Posterior cingulate gyrus (tissue), 11 donors: ENCODE measurements at regions of chr18 and their contacts with region 1.

Region 1: GRCh38 chr18:63320046-63320689 is 599 bp upstream of the BCL2 start:
- DNase-seq: peak; percentile 68 to 96 (median 78)

Region 2: GRCh38 chr18:62904396-62905285 is 415.5 kb before region 1 on chr18:
- intact Hi-C with region 1: no loop called
- DNase-seq: no peak

Region 3: DNA sequence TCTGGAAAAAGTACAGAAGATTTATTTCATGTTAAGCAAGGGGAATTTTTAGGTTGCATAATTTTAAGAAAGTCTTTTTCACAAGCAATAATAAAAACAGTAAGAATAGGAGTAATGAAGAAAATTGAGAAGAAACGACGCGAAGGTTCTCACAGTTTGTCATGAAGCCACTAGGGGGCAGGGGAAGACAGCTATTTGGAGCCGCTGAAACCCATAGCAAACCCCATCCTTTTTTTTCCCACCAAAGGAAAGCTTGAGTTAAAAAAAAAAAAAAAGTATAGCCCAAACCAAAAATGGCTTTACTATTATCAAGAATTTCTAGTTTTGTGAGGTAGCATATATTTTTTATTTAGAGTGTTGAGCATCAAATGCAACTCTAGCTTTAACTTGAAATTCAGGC is 303.9 kb before region 1 on chr18:
- intact Hi-C with region 1: loop called (anchors 1 kb)
- DNase-seq: peak in 6 of 10 donors; percentile 29 to 56 (median 42)

Region 4: GRCh38 chr18:63119647-63120046 is 200.5 kb before region 1 on chr18:
- intact Hi-C with region 1: loop called (anchors 1 kb)
- DNase-seq: peak in 9 of 10 donors; percentile 21 to 94 (median 61)

Region 5: GRCh38 chr18:63131106-63131958 is 188.8 kb before region 1 on chr18:
- intact Hi-C with region 1: loop called (anchors 5 kb)
- DNase-seq: peak in 4 of 10 donors; percentile 42 to 79 (median 58)

Region 6: DNA sequence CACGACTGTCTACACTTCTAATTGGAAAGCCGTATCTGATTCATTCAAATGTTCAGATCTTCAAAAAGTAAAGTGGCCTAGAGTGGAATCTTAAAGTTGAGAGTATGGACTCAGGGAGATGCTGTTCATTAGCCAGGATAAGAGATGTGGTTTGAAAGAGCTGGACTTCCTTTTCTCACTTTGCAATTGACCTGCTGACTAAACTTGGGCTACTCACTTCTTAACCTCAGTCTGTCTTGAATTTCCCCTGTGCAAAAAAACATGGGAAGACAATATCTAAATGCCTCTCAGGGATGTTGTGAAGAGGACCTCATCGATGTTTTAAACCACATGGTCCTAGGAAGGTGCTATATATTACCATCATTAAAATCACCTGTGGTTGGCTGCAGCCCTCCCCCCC is 64.7 kb before region 1 on chr18:
- intact Hi-C with region 1: loop called (anchors 5 kb)
- DNase-seq: no peak

Region 7: GRCh38 chr18:63367053-63367953 is 47.1 kb after region 1 on chr18 and contains the start of gene KDSR:
- intact Hi-C with region 1: loop called (anchors 1 kb)
- DNase-seq: peak; percentile 84 to 98 (median 92)